ENCODE measurements at regions of chr4 and their contacts with region 1.

Region 1: GRCh38 chr4:75484190-75484589 is 30.0 kb downstream of the RCHY1 start:
- DNase-seq: no peak
- H3K4me3 Mint-ChIP-seq: no peak overlapping the region
- H3K27ac Mint-ChIP-seq: no peak overlapping the region
- H3K4me1 Mint-ChIP-seq: no peaks in the 10 kb centered on the region
- H3K27me3 Mint-ChIP-seq: no peaks in the 10 kb centered on the region

Region 2: GRCh38 chr4:74874753-74875367 is 609.3 kb before region 1 on chr4:
- intact Hi-C with region 1: loop called (anchors 10 kb)
- DNase-seq: peak; percentile 78
- H3K4me3 Mint-ChIP-seq: no peak overlapping the region
- H3K27ac Mint-ChIP-seq: no peak overlapping the region
- H3K4me1 Mint-ChIP-seq: no peaks in the 10 kb centered on the region
- H3K27me3 Mint-ChIP-seq: peaks cover 4% of the 10 kb centered on the region

Region 3: DNA sequence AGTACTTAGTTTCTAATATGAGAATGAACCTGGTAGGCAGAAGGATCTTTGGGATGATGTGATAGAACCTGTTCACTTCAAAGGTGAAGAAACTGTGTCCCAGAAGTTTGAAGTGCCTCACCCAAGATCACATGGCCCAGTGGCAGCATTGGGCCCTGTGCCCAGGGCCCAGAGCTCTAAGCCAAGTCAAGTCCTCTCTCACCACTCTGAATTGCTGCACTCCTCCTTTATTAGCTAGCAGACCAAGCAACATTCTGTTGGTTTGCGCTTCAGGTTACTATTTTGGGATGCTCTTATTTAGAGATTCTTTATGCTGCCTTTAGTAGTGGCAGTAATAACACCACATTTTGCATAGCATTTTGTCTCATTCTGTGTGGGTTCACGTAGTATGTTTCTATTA is 468.6 kb before region 1 on chr4:
- intact Hi-C with region 1: no loop called
- DNase-seq: no peak
- H3K4me3 Mint-ChIP-seq: no peak overlapping the region
- H3K27ac Mint-ChIP-seq: no peak overlapping the region
- H3K4me1 Mint-ChIP-seq: no peaks in the 10 kb centered on the region
- H3K27me3 Mint-ChIP-seq: no peaks in the 10 kb centered on the region